Aorta (tissue), 5 donors: ENCODE measurements at regions of chr4 and their contacts with region 1.

Region 1: GRCh38 chr4:145618932-145619638 is at the start of gene MMAA:
- DNase-seq: peak; percentile 97 to 99
- ATAC-seq: peak; percentile 100
- H3K4me3 ChIP-seq: peak within 1 kb of the TSS; percentile 95 to 96
- H3K27ac ChIP-seq: peak within 1 kb of the TSS; percentile 88 to 93
- H3K4me1 ChIP-seq: peaks cover 3 to 4% of the 10 kb centered on the region in 2 donors
- H3K27me3 ChIP-seq: no peaks in the 10 kb centered on the region
- total RNA-seq, gene MMAA: 8.8 to 10.2 TPM

Region 2: GRCh38 chr4:145216535-145216934 is 402.6 kb before region 1 on chr4:
- intact Hi-C with region 1: loop called in 1 of 2 experiments (anchors 10 kb)
- DNase-seq: no peak
- ATAC-seq: no peak
- H3K4me3 ChIP-seq: no peak overlapping the region
- H3K27ac ChIP-seq: no peak overlapping the region
- H3K4me1 ChIP-seq: no peaks in the 10 kb centered on the region
- H3K27me3 ChIP-seq: no peaks in the 10 kb centered on the region

Region 3: DNA sequence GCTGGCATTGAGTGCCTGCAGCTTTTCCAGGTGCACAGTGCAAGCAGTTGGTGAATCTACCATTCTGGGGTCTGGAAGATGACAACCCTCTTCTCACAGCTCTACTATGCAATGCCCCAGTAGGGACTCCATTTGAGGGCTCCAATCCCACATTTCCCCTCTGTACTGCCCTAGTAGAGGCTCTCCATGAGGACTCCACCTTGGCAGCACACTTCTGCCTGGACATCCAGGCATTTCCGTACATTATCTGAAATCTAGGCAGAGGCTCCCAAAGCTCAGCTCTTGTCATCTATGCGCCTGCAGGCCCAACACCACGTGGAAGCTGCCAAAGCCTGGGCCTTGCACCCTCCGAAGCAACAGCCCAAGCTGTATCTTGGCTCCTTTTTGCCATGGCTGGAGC is 145.9 kb before region 1 on chr4:
- intact Hi-C with region 1: loop called in 1 of 2 experiments (anchors 10 kb)
- DNase-seq: no peak
- ATAC-seq: no peak
- H3K4me3 ChIP-seq: no peak overlapping the region
- H3K27ac ChIP-seq: no peak overlapping the region
- H3K4me1 ChIP-seq: no peaks in the 10 kb centered on the region
- H3K27me3 ChIP-seq: no peaks in the 10 kb centered on the region

Region 4: GRCh38 chr4:145732895-145733880 is 114.1 kb after region 1 on chr4:
- intact Hi-C with region 1: loop called (anchors 2 to 5 kb)
- DNase-seq: peak; percentile 97 to 98
- ATAC-seq: peak; percentile 94
- H3K4me3 ChIP-seq: peak overlapping the region; percentile 28 to 53
- H3K27ac ChIP-seq: peak overlapping the region; percentile 98 to 99
- H3K4me1 ChIP-seq: peaks cover 0 to 2% of the 10 kb centered on the region in 2 donors
- H3K27me3 ChIP-seq: no peaks in the 10 kb centered on the region

Region 5: DNA sequence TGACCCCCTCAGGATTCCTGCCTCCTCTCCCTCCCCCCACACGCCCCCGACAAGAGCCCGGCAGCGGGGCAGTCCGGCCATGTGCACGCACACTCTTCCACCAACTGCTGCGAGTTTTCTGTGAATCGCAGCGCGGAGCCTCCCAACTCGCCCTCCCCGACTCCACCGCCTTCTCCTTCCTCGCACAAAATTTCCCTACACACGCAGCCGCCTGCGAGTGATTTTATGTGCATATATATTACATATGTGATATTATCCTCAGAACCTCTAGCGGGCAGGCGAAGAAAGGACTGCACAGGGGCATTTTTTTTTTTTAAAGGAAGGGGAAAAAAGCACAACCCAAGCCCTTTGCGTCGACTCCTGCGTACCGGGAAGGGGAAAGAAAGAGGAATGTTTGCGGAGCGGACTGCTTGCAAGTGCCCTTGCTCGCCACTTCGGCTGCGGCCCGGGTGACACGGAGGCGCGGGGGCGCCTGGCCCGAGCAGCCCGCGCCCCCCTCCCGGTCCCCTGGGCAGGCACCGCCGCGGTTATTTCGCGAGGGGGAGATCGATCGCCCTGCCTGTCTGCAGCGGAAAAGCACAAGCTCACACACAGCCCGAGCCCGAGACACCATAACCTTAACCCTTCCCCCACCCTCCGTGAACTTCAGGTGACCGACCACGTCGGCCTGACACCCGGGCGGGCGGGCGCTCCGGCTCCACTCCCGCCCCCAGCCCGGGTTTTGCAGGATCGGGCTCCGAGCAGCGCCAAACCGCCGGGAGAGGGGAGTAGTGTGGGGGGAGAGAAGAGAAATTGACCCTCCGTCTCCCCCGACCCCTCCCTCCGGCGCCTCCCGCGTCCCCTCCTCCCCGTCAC is 317.3 kb after region 1 on chr4:
- intact Hi-C with region 1: loop called (anchors 2 to 5 kb)
- DNase-seq: peak; percentile 78 to 87
- ATAC-seq: peak; percentile 73
- H3K4me3 ChIP-seq: peak overlapping the region; percentile 92 to 100
- H3K27ac ChIP-seq: peak overlapping the region; percentile 74 to 99
- H3K4me1 ChIP-seq: peaks cover 4 to 5% of the 10 kb centered on the region in 2 donors
- H3K27me3 ChIP-seq: no peaks in the 10 kb centered on the region

Region 6: DNA sequence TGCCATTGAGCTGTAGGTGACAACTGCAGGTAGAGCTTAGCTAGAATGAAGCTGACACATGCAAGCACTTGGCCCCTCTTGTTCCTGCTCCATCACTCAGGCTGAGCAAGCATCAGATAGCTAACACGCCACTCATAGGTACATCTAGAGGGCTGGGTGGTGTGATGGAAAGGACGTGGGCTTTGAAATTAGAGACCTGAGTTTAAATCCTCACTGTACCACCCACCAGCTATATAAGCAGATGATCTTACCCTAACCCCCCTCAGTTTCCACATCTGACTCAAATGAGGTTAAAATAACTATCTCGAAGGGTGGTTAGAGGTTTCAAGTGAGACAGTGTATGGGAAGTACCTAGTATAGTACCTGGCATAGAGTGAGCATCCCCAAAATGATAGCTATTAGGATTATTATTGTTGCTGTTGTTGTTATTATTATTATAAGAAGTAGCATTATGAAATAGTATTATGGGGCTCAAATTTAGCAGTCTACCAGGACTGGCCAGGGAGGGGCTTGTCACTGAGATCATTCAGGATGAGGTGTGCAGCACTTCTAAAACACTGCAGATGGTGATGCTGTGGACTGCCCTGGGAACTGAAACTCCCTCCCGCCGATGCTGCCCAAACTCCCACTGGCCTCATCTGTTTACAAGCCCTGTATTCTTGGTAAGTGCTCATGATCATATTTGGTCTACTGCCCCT is 654.3 kb after region 1 on chr4:
- intact Hi-C with region 1: no loop called
- DNase-seq: no peak
- ATAC-seq: no peak
- H3K4me3 ChIP-seq: no peak overlapping the region
- H3K27ac ChIP-seq: no peak overlapping the region
- H3K4me1 ChIP-seq: no peaks in the 10 kb centered on the region
- H3K27me3 ChIP-seq: no peaks in the 10 kb centered on the region